ENCODE measurements at regions of chr17 and their contacts with region 1.

Region 1: DNA sequence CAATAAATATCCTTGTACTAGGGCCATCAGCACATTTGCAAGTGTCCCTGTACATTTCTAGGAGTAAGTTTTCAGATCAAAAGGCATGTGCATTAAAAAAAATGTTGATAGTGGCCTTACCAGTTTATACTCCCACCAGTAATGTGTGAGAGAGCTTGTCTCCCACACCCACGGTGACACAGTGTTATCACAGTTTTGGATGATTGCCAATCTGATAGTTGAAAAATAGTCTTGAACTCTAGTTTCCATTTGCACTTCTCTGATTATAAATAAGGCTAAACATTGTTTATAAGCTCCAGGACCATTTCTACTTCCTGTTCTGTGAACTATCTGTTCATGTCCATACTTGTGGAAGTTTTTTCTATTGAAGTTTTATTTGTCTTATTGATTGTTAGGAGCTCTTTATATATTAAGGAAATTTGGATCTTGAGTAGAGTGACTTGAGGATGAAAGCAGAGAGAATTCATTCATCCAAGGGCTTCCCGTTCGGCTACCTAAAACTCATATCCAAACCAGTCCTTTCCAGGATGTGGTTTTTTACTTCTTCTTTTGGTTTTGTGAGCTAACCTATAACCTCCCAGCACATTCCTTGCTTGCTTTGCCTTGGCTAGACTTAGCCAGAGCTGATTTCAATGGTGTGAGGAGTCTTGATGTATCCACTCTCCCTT is 25.9 kb upstream of the MPRIP start:
- H3K4me3 Mint-ChIP-seq: no peak overlapping the region
- H3K27ac Mint-ChIP-seq: no peak overlapping the region
- H3K4me1 Mint-ChIP-seq: peaks cover 53% of the 10 kb centered on the region
- H3K27me3 Mint-ChIP-seq: peaks cover 63% of the 10 kb centered on the region

Region 2: GRCh38 chr17:17063546-17064122 is 47.3 kb after region 1 on chr17:
- intact Hi-C with region 1: loop called (anchors 10 kb)
- H3K4me3 Mint-ChIP-seq: no peak overlapping the region
- H3K27ac Mint-ChIP-seq: no peak overlapping the region
- H3K4me1 Mint-ChIP-seq: peaks cover 73% of the 10 kb centered on the region
- H3K27me3 Mint-ChIP-seq: peaks cover 1% of the 10 kb centered on the region

Measured in dendritic cell treated with granulocyte-macrophage colony-stimulating factor and Interleukin-4, amounts not matched to agents 40 ng/mL and 50 ng/mL, for 4 days (primary cell).